ENCODE measurements at regions of chr3 and their contacts with region 1.

Region 1: GRCh38 chr3:16290007-16290826 is 25.2 kb downstream of the OXNAD1 start:
- DNase-seq: peak; percentile 79
- ATAC-seq: no peak
- H3K4me3 Mint-ChIP-seq: peak overlapping the region; percentile 79
- H3K27ac Mint-ChIP-seq: peak overlapping the region; percentile 94
- H3K4me1 Mint-ChIP-seq: peaks cover 94% of the 10 kb centered on the region
- H3K27me3 Mint-ChIP-seq: no peaks in the 10 kb centered on the region

Region 2: GRCh38 chr3:16309558-16309957 is 19.3 kb after region 1 on chr3:
- CTCF ChIA-PET with region 1: interaction called, 262 read pairs
- POLR2A ChIA-PET with region 1: interaction called, 6 read pairs
- intact Hi-C with region 1: loop called (anchors 1 to 2 kb)
- DNase-seq: peak; percentile 69
- ATAC-seq: peak; percentile 78
- H3K4me3 Mint-ChIP-seq: peak overlapping the region; percentile 25
- H3K27ac Mint-ChIP-seq: peak overlapping the region; percentile 87
- H3K4me1 Mint-ChIP-seq: peaks cover 93% of the 10 kb centered on the region
- H3K27me3 Mint-ChIP-seq: no peaks in the 10 kb centered on the region

Region 3: GRCh38 chr3:16511681-16512434 is 221.6 kb after region 1 on chr3:
- CTCF ChIA-PET with region 1: interaction called, 7 read pairs
- POLR2A ChIA-PET with region 1: interaction called, 3 read pairs
- intact Hi-C with region 1: loop called (anchors 1 to 5 kb)
- DNase-seq: peak; percentile 92
- ATAC-seq: peak; percentile 72
- H3K4me3 Mint-ChIP-seq: peak overlapping the region; percentile 99
- H3K27ac Mint-ChIP-seq: peak overlapping the region; percentile 88
- H3K4me1 Mint-ChIP-seq: peaks cover 73% of the 10 kb centered on the region
- H3K27me3 Mint-ChIP-seq: no peaks in the 10 kb centered on the region

Region 4: DNA sequence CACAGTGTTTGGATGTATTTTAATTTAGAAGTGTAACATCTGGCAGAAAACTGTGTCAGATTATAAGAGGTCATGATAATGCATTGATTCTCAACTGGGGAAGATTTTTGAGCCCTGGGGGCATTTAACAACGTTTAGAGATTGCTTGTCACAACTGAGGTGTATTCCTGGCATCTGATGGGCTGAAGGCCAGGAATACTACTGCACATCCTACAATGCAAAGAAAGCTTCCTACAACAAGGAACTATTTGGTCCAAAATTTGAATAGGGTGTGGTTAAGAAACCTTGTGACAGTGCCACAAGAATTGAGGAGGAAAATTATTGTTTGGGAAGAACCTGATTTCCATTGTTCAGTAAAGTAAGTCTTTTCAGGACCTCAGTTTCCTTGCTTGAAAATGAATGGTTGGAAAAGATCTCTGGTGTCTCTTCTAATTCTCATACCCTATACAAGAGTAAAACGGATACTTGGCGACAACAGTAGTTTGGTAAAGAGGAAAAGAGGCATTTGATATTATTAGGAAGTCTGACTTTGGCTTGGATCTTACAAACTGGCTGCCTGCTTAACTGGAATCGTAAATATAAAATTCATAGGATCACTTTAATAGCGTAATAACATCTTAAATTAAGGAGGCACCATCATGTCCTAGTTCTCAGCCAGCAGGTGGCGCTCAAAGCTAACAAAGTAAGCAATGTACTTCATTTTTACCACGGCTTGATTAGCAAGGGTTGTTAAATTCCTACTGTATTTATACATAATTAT is 310.7 kb after region 1 on chr3:
- CTCF ChIA-PET with region 1: interaction called, 5 read pairs
- POLR2A ChIA-PET with region 1: no interaction called
- intact Hi-C with region 1: loop called (anchors 1 to 2 kb)
- DNase-seq: peak; percentile 90
- ATAC-seq: no peak
- H3K4me3 Mint-ChIP-seq: no peak overlapping the region
- H3K27ac Mint-ChIP-seq: no peak overlapping the region
- H3K4me1 Mint-ChIP-seq: peaks cover 22% of the 10 kb centered on the region
- H3K27me3 Mint-ChIP-seq: peaks cover 20% of the 10 kb centered on the region

Region 5: DNA sequence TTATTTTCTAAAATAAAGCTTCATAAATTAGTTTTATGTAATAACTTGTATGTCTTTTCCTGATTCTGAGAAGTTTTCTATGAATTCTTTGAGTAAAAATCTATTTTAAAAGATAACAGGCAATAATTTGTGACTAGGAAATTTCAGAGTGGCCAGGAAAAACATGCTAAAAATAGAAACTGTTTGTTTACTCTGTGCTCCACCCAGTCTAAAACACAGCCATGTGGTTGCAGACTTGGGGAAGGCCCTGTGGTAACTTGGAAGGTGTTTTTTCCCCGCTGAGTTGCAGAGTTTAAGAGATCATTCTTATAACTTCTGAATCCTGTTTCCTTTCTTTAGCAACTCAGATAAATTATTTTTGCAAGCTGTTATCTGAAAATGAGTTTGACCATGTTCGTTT is 616.5 kb after region 1 on chr3:
- CTCF ChIA-PET with region 1: no interaction called
- POLR2A ChIA-PET with region 1: no interaction called
- intact Hi-C with region 1: loop called in 1 of 2 experiments (anchors 10 kb)
- DNase-seq: no peak
- ATAC-seq: peak; percentile 19
- H3K4me3 Mint-ChIP-seq: no peak overlapping the region
- H3K27ac Mint-ChIP-seq: no peak overlapping the region
- H3K4me1 Mint-ChIP-seq: peaks cover 83% of the 10 kb centered on the region
- H3K27me3 Mint-ChIP-seq: no peaks in the 10 kb centered on the region

Measured in activated CD4-positive, alpha-beta T cell treated with anti-CD3 and anti-CD28 coated beads for 36 hours (primary cell).